Mammary epithelial cell (primary cell): ENCODE measurements at regions of chr3 and their contacts with region 1.

Region 1: DNA sequence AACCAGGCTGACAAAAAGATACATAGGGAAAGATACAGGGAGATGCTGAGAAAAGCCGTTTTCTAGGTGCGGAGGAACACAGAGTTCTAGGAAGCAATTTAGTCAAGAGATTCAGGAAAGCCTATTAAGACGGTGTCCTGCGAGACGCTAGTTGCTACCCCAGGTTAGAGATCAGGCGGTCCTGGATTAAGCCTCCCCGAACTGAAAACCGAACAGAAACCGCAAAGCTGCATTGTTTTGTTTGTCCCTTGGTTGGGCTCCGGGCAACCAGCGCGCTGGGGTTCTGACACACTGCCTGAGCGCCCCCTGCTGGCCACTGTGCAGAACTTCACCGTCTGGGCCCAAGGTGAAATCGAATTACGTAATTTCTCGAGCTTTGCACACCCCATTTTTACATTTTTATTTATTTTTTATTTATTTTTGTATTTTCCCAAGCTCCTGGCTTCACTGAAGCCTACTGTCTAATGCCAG is 37.3 kb upstream of the NDUFB4 start:
- DNase-seq: peak; percentile 76
- H3K4me3 ChIP-seq: peak overlapping the region; percentile 46 to 70 (median 62)
- H3K27ac ChIP-seq: peak overlapping the region; percentile 92
- H3K4me1 ChIP-seq: peaks cover 5% of the 10 kb centered on the region
- H3K27me3 ChIP-seq: no peaks in the 10 kb centered on the region
- CTCF ChIP-seq: peak; percentile 93 to 95

Region 2: GRCh38 chr3:120245386-120245785 is 313.4 kb before region 1 on chr3:
- CTCF ChIA-PET with region 1: interaction called, 3 read pairs
- dilution Hi-C with region 1: no loop called
- in situ Hi-C with region 1: loop called (anchors 10 kb)
- intact Hi-C with region 1: loop called (anchors 1 kb)
- DNase-seq: no peak
- H3K4me3 ChIP-seq: no peak overlapping the region
- H3K27ac ChIP-seq: no peak overlapping the region
- H3K4me1 ChIP-seq: no peaks in the 10 kb centered on the region
- H3K27me3 ChIP-seq: no peaks in the 10 kb centered on the region
- CTCF ChIP-seq: no peak

Region 3: GRCh38 chr3:120348981-120349818 is 209.6 kb before region 1 on chr3 and contains the start of gene LRRC58:
- CTCF ChIA-PET with region 1: no interaction called
- dilution Hi-C with region 1: no loop called
- in situ Hi-C with region 1: no loop called
- intact Hi-C with region 1: loop called (anchors 2 kb)
- DNase-seq: peak; percentile 95
- H3K4me3 ChIP-seq: peak within 1 kb of the TSS; percentile 85 to 95 (median 85)
- H3K27ac ChIP-seq: peak within 1 kb of the TSS; percentile 76
- H3K4me1 ChIP-seq: peaks cover 8% of the 10 kb centered on the region
- H3K27me3 ChIP-seq: no peaks in the 10 kb centered on the region
- CTCF ChIP-seq: peak in 1 of 2 donors; percentile 40
- total RNA-seq, gene LRRC58: 21.3 to 28.2 TPM

Region 4: GRCh38 chr3:120425572-120426250 is 133.1 kb before region 1 on chr3:
- CTCF ChIA-PET with region 1: interaction called, 4 read pairs
- dilution Hi-C with region 1: loop called (anchors 5 kb)
- in situ Hi-C with region 1: loop called in 1 of 2 experiments (anchors 10 kb)
- intact Hi-C with region 1: no loop called
- DNase-seq: no peak
- H3K4me3 ChIP-seq: no peak overlapping the region
- H3K27ac ChIP-seq: no peak overlapping the region
- H3K4me1 ChIP-seq: no peaks in the 10 kb centered on the region
- H3K27me3 ChIP-seq: no peaks in the 10 kb centered on the region
- CTCF ChIP-seq: no peak

Region 5: GRCh38 chr3:120622870-120623731 is 64.3 kb after region 1 on chr3:
- CTCF ChIA-PET with region 1: no interaction called
- dilution Hi-C with region 1: no loop called
- in situ Hi-C with region 1: no loop called
- intact Hi-C with region 1: loop called (anchors 2 kb)
- DNase-seq: peak; percentile 71
- H3K4me3 ChIP-seq: no peak overlapping the region
- H3K27ac ChIP-seq: no peak overlapping the region
- H3K4me1 ChIP-seq: no peaks in the 10 kb centered on the region
- H3K27me3 ChIP-seq: no peaks in the 10 kb centered on the region
- CTCF ChIP-seq: peak in 1 of 2 donors; percentile 34

Region 6: DNA sequence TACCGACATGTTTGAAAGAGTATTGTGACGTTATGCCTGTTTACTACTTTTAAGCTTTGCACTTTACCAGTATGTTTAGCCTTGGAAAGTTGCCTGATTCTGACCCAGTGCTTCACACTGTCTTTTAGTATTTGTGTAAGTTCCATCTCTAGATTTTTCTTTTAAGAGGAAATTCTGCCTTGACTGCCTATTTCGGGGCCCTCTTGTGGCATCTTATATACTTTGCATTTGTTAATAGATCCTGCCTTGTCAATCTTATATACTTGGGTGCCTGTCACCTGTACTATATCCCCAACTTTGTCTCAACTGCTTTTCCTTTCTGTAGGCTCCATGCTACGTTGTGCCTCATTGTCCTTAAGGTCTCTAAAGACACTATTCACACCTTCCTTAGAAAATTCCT is 593.8 kb after region 1 on chr3:
- CTCF ChIA-PET with region 1: no interaction called
- dilution Hi-C with region 1: no loop called
- in situ Hi-C with region 1: no loop called
- intact Hi-C with region 1: loop called (anchors 5 kb)
- DNase-seq: peak; percentile 4
- H3K4me3 ChIP-seq: no peak overlapping the region
- H3K27ac ChIP-seq: no peak overlapping the region
- H3K4me1 ChIP-seq: no peaks in the 10 kb centered on the region
- H3K27me3 ChIP-seq: no peaks in the 10 kb centered on the region
- CTCF ChIP-seq: peak in 1 of 2 donors; percentile 43